KBM-7 (cell line): ENCODE measurements at regions of chr1 and their contacts with region 1.

Region 1: GRCh38 chr1:67227196-67227595 is 60.9 kb downstream of the IL23R start:
- DNase-seq: no peak

Region 2: DNA sequence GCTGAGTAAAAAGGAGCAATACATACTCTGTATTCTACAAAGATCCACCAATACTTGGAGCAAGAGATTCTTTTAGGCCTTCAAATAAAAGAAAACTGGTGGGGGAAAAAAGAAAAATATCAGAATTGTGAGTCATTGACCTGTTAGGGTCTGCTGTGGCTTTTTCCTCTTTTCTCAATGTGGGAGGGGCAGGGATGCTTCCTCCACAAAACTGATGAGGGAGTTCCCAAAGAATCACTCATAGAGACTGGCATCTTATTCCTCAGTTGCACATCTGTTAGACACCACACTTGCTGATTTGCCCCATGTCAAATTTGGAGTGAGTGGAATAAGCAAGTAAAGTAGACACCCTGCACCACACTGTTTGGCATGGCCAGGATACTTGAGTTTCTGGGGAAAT is 109.0 kb before region 1 on chr1:
- in situ Hi-C with region 1: no loop called
- DNase-seq: no peak

Region 3: DNA sequence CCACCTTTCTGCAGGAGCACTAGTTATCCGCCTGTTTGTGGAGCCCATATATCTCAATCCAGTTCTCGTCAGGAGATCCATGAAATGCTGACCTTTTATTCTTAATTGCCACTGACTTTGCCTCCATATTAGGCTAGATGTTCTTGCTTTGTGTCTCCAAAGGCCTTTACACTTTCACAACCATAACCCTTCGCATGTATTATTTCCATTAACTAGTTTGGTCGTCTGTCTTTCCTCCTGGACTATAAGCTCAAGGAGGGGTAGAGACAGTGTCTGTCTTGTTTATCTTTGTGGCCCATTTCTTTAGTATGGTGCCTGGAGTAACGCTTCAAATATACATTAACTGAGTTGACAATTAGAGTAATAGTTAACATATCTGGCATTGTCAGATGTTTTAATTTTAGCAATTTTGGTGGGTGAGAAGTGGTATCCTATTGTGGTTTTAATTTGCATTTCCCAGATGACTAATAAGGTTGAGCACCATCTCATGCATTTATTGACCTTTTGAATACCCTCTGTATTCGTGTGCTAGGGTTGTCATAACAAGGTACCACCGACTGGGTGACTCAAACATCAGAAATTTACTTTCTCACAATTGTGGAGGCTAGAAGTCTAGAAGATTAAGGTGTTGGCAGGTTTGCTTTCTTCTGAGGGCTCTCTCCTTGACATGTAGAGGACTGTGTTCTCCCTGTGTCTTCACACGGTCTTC is 58.7 kb after region 1 on chr1:
- in situ Hi-C with region 1: no loop called
- DNase-seq: no peak

Region 4: DNA sequence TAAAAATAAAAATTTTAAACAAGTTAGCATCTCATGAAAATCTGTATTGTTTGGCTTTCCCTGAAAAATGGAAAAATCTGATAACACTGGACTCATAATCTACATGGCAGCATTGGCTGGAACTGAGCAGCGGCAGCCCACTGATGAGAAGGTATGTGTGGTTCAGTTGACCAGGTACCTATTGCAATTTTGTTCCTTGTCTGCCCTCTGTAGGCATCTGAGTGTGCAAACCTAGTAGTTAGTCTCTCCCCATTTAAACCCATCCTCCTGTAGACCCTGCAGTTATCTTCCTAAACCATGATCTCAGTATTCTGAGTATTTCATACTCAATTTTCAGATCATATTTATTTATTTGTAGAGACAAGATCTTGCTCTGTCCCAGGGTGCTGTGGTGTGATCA is 262.4 kb after region 1 on chr1:
- in situ Hi-C with region 1: loop called (anchors 25 kb)
- DNase-seq: peak; percentile 27

Region 5: GRCh38 chr1:67626495-67627235 is 399.5 kb after region 1 on chr1:
- in situ Hi-C with region 1: no loop called
- DNase-seq: no peak